HepG2 (cell line): ENCODE measurements at regions of chr18 and their contacts with region 1.

Region 1: DNA sequence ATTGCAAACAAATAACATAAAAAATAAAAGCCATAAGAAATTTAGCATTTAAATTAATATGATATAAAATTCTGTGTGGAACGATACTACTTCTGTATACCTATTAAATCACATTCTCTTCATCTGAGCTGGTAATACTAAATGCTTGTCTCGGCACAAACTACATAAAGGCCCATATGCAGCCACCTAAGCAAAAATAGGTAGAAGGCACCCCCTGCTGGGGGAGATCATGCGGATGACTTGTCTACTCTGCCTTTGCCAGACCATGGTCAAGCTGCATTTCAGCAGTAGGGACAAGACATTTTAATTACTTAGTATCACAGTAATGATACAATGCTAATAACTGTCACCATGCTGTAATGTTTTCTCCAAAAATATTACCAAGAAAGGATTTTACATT is 108.0 kb downstream of the CDH19 start:
- DNase-seq: peak; percentile 62
- ATAC-seq: peak; percentile 98
- H3K4me3 ChIP-seq: no peak overlapping the region
- H3K27ac ChIP-seq: no peak overlapping the region
- H3K4me1 ChIP-seq: no peaks in the 10 kb centered on the region
- H3K27me3 ChIP-seq: no peaks in the 10 kb centered on the region
- CTCF ChIP-seq: peak; percentile 78
- EP300 ChIP-seq: no peak
- POLR2A ChIP-seq: no peak
- RAD21 ChIP-seq: peak; percentile 52; the same call in 1 of the 2 replicates

Region 2: DNA sequence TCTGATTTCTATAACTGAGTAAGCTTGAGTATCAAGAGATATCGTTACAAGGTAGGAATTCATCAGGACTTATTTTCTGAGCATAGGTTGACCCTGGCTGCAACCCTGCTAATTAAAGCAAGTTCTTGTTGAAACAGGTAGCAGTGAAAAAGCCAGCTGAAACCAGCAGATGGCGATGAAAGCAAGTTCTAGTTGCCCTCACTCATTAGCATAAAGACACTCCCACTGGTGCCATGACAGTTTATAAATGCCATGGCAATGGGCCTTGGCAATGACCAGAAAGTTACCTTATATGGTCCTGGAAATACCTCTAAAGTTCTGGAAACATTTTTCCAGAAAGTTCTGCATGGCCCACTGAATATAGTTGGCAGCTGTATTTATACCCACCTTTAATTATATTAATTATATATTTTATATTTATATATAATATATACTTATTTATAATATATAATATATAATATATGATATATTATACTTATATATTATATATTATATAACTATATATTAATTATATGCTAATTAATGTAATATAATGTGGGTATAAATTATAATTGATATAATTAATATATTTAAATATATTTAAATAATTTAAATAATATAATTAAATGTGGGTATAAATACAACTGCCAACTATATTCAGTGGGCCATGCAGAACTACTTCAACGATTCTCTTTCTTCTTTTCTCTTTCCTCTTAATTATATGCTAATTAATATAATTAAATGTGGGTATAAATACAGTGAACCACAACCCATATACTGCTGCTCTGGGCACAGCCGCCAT is 557.1 kb before region 1 on chr18:
- CTCF ChIA-PET with region 1: no interaction called
- POLR2A ChIA-PET with region 1: no interaction called
- in situ Hi-C with region 1: no loop called
- intact Hi-C with region 1: loop called (anchors 1 kb)
- DNase-seq: peak; percentile 34
- ATAC-seq: peak; percentile 76
- H3K4me3 ChIP-seq: no peak overlapping the region
- H3K27ac ChIP-seq: no peak overlapping the region
- H3K4me1 ChIP-seq: no peaks in the 10 kb centered on the region
- H3K27me3 ChIP-seq: no peaks in the 10 kb centered on the region
- CTCF ChIP-seq: 0 out of 2 replicates have a peak, but pooled peaks have one; percentile 14
- EP300 ChIP-seq: no peak
- POLR2A ChIP-seq: no peak
- RAD21 ChIP-seq: no peak

Region 3: DNA sequence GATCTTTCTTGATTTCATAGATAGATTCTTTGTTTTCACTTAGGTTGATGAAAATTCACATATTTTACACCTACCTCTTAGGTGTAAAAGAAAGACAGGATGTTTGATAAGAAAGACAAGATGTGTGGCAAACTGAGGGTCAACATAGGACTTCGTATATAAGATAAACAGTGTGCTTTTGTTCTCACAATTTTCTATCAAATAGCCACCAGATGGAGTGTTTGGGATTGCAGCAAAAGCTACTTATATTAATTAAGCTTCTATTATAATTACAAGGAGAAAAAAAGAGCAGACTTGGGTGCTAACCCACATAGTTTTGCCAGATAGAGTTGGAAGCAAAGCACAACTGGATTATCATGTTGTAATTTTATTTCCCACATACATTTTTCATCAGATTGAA is 512.1 kb before region 1 on chr18:
- CTCF ChIA-PET with region 1: interaction called, 5 read pairs
- POLR2A ChIA-PET with region 1: no interaction called
- in situ Hi-C with region 1: no loop called
- intact Hi-C with region 1: loop called (anchors 5 kb)
- DNase-seq: peak; percentile 5
- ATAC-seq: no peak
- H3K4me3 ChIP-seq: no peak overlapping the region
- H3K27ac ChIP-seq: no peak overlapping the region
- H3K4me1 ChIP-seq: no peaks in the 10 kb centered on the region
- H3K27me3 ChIP-seq: no peaks in the 10 kb centered on the region
- CTCF ChIP-seq: no peak
- EP300 ChIP-seq: no peak
- POLR2A ChIP-seq: no peak
- RAD21 ChIP-seq: no peak

Region 4: GRCh38 chr18:66393463-66393862 is 102.4 kb before region 1 on chr18:
- CTCF ChIA-PET with region 1: no interaction called
- POLR2A ChIA-PET with region 1: no interaction called
- in situ Hi-C with region 1: no loop called
- intact Hi-C with region 1: loop called (anchors 1 kb)
- DNase-seq: no peak
- ATAC-seq: no peak
- H3K4me3 ChIP-seq: no peak overlapping the region
- H3K27ac ChIP-seq: no peak overlapping the region
- H3K4me1 ChIP-seq: no peaks in the 10 kb centered on the region
- H3K27me3 ChIP-seq: no peaks in the 10 kb centered on the region
- CTCF ChIP-seq: no peak
- EP300 ChIP-seq: no peak
- POLR2A ChIP-seq: no peak
- RAD21 ChIP-seq: no peak

Region 5: DNA sequence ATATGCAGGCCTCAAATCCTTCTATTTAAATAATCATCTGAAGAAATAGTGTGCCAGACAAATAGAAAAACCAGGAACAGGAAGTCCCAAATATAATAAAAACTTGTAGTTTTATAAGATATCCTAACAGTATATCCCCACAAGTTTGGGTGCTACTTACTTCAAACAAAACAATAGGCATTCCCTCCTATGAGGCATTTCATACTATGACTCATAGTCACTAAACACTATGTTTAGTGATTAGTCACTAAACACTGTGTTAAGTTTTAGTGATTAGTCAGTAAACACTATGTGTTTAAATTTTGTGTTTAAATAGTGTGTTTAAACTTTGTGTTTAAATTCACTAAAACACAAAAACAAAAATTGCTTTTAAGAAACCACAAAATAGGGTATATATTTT is 515.1 kb after region 1 on chr18:
- CTCF ChIA-PET with region 1: no interaction called
- POLR2A ChIA-PET with region 1: no interaction called
- in situ Hi-C with region 1: no loop called
- intact Hi-C with region 1: no loop called
- DNase-seq: no peak
- ATAC-seq: no peak
- H3K4me3 ChIP-seq: no peak overlapping the region
- H3K27ac ChIP-seq: no peak overlapping the region
- H3K4me1 ChIP-seq: no peaks in the 10 kb centered on the region
- H3K27me3 ChIP-seq: no peaks in the 10 kb centered on the region; a peak in 1 of 5 replicates
- CTCF ChIP-seq: no peak
- EP300 ChIP-seq: no peak
- POLR2A ChIP-seq: no peak
- RAD21 ChIP-seq: no peak